Sciatic nerve (tissue), 2 donors: ENCODE measurements at regions of chr4 and their contacts with region 1.

Region 1: DNA sequence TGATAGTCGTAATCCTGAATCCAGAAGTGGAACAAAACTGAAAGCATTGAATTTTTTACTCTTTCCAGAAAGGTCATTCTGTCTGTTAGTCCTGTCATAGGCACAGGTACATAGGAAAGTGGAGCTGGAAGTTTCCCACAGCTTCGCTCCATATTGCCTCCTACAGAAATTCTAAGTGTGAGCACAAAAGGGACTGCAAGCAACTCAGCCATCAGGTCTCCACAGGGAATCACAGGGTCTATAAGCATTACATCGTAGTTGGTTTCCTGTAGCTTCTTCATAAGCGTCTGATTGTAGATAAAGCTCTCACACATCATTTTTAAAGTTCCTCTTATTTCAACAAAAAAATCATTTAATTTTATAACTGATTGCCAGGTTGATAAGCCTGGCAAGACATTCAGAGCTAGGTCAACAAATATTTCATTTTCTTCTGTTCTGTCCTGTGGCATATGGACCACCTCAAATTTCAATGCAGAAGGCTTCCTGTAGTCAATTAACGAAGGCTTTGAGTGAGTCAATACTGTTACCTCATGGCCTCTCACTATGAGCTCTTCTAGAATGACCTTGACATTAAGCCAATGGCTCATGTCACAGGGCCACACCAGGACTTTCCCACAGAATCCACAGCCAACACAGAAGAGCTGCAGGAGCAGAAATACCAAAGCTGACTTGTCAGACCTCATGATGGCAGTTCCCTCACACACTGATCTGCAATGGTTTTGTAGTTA is at the start of gene UGT2A3:
- DNase-seq: no peak
- ATAC-seq: no peak
- total RNA-seq, gene UGT2A3: not detected

Region 2: DNA sequence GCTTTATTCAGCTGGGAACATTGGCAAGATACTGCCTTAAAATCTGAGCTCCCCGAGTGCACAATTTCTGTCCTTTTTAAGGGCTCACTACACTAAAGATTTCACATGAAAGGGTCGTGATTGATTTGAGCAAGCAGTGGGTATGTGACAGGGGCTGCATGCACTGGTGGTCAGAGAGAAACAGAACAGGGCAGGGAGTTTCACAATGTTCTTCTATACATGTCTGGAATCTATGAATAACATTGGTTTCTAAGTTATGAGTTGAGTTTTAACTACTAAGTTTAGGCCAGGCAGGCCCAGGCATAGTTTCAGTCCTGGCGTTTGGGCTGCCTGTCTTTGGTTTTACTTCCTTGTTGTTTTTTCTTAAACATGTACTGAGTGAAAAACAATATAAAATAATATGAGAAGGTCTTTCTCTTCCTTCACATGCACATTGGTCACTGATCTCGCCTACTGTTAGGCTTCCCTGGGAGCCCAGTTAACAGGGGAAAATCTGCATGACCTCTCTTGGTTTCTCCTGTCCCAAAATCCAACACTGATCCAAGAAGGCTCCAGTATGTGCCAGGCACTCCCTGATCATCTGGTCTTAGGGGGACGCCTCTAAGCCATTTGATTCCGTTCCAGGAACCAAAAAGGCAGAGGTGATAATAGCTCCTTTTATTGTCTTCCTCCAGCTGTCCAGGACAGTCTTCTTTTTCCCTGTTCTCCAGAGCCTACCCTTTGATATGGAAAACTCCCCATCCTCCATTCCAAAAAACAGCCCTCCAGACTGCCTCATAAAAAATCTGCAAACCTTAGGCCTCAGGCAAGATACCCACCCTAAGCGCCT is 374.8 kb before region 1 on chr4 and contains the start of gene UGT2B17:
- intact Hi-C with region 1: loop called (anchors 10 kb)
- DNase-seq: no peak
- ATAC-seq: peak; percentile 17
- total RNA-seq, gene UGT2B17: not detected

Region 3: DNA sequence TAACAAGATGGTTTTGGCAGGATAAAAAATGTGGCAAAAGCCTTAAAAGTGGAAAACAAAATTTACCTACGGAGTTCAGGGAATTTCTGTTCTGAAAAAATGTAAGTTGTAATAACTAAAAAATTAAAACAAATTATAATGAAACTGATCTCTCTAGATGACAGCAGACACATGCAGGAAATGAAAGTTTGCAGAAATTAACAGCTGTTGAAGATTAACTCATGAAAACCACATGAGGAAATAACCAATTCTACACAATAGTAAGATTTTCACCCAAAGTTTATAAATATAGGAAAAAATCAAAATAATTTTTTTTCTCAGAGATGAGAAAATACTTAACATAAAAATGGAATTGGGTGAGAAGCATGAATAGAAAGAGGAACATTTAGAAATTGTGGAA is 233.2 kb before region 1 on chr4:
- intact Hi-C with region 1: no loop called
- DNase-seq: no peak
- ATAC-seq: no peak

Region 4: DNA sequence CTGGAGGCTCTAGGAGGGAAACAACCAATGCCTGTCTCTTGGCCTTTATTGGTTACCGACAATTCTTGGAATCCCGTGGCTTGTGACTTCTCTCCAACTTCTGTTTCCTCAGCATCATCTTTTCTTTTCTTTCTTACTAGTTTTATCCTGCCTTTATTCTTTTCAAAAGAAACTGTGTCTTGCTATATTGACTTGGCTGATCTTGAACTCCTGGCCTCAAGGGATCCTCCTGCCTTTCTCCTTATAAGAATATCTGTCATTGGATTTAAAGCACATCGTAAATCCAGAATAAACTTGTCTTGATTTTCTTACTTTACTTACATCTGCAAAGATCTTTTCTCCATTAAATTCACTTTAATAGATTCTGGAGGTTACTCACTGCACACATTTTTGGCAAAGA is 185.4 kb before region 1 on chr4:
- intact Hi-C with region 1: no loop called
- DNase-seq: no peak
- ATAC-seq: no peak

Region 5: DNA sequence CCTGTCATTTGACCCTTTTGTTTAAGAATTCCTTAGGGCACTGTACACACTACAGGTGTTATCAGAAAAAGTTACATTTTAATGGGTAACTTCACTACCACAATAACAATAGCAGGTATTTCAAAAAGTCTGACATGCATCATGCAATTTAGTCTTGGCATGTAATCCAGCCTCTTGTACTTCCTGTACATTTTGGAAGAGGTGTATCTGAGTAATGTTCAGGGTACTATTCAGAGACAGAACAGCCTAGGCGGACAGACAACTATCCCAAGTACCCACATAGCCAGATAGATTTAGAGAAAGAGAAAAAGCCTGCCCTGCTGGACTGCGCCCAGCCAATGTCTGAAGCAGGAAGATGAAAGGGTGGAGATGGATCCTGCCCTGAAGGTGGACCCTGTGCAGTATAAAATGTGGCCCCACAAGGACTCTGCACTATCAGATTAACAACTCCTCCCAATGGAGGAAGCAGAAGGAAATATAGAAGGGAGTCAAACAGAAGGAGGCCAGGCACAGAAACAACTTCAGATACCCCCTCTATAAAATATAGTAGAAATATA is 153.6 kb after region 1 on chr4:
- intact Hi-C with region 1: no loop called
- DNase-seq: no peak
- ATAC-seq: no peak